Panc1 (cell line): ENCODE measurements at regions of chr20 and their contacts with region 1.

Region 1: DNA sequence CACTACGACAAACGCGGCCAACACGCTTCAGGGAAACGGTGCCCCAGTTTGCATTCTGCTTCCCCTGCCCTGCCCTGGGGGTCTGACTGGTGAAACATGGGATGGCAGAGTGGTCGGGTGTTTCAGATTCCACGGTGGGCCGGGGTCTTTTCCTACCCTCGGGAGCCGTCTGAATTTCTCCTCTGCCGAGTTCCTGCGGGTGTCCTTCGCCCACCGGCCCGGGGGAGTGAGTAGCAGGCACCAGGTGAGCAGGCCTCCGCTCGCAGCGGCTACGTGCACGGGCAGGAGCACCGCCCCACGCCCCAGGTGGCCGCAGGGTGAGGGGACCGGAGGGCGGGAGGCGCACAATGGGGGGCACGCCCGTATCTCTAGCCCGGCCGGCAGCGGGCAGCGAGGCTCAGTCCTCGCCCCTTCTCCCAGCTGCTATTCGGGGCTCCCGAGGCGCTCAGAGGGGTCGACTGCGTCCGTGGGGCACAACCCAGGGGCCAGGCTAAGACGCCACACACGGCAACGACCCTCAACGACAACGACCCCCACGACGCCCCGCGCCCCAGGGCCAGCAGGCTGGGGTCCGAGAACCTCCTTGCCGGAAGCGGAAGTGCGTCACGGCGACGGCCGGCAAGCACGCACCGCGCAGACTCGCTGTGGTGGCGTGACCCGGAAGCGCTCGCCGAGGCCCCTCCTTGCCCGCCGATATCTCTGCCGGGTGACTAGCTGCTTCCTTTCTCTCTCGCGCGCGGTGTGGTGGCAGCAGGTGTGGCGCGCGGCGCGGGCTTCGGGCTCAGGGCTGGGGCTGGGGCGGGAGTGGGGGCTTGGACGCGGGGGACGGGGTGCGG is at the start of gene RPS21:
- DNase-seq: no peak
- ATAC-seq: peak; percentile 88
- H3K4me3 ChIP-seq: peak within 1 kb of the TSS; percentile 90 to 97
- H3K27ac ChIP-seq: peak within 1 kb of the TSS; percentile 94
- H3K4me1 ChIP-seq: peaks cover 33% of the 10 kb centered on the region
- H3K27me3 ChIP-seq: no peaks in the 10 kb centered on the region
- CTCF ChIP-seq: no peak
- total RNA-seq, gene RPS21: 1,761 TPM

Region 2: DNA sequence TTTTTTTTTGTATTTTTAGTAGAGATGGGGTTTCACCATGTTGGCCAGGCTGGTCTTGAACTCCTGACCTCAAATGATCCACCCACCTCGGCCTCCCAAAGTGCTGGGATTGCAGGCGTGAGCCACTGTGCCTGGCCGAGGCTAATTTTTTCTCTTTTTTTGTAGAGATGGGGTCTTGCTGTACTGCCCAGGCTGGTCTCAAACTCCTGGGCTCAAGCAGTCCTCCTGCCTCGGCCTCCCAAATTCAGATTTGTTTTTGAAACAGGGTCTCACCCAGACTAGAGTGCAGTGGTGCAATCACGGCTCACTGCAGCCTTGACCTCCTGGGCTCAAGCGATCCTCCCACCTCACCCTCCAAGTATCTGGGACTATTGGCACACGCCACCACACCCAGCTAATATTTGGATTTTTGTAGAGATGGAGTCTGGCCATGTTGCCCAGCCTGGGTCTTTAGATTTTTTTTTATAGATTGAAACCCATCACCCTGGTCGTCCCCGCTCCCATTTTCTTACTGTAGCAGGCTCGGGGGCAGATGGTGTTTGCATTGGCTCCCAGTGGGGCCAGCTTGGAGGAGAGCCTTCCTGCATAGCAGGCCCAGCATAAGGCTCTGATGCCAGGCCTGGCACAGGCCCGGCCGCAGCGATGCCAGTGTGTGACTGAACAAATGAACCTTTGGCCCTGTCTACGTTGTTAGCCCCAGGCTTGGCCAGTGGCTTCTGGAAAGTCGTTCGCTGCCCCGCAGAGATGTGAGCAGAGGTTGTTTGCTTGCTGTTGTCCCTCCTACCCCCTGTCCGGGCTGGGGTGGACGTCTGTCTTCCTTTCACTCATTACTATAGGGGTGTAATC is 208.1 kb before region 1 on chr20:
- CTCF ChIA-PET with region 1: interaction called, 11 read pairs
- POLR2A ChIA-PET with region 1: no interaction called
- in situ Hi-C with region 1: no loop called
- intact Hi-C with region 1: no loop called
- DNase-seq: no peak
- ATAC-seq: no peak
- H3K4me3 ChIP-seq: no peak overlapping the region
- H3K27ac ChIP-seq: no peak overlapping the region
- H3K4me1 ChIP-seq: peaks cover 7% of the 10 kb centered on the region; the same call in 1 of the 2 replicates
- H3K27me3 ChIP-seq: no peaks in the 10 kb centered on the region
- CTCF ChIP-seq: no peak

Region 3: GRCh38 chr20:62302341-62303058 is 84.1 kb before region 1 on chr20 and contains the start of gene ADRM1:
- CTCF ChIA-PET with region 1: interaction called, 7 read pairs
- POLR2A ChIA-PET with region 1: interaction called, 7 read pairs
- in situ Hi-C with region 1: no loop called
- intact Hi-C with region 1: loop called (anchors 5 kb)
- DNase-seq: peak; percentile 76
- ATAC-seq: peak; percentile 80
- H3K4me3 ChIP-seq: peak within 1 kb of the TSS; percentile 83 to 94
- H3K27ac ChIP-seq: peak within 1 kb of the TSS; percentile 91
- H3K4me1 ChIP-seq: peaks cover 26% of the 10 kb centered on the region
- H3K27me3 ChIP-seq: no peaks in the 10 kb centered on the region
- CTCF ChIP-seq: peak; percentile 92
- total RNA-seq, gene ADRM1: 194 TPM

Region 4: DNA sequence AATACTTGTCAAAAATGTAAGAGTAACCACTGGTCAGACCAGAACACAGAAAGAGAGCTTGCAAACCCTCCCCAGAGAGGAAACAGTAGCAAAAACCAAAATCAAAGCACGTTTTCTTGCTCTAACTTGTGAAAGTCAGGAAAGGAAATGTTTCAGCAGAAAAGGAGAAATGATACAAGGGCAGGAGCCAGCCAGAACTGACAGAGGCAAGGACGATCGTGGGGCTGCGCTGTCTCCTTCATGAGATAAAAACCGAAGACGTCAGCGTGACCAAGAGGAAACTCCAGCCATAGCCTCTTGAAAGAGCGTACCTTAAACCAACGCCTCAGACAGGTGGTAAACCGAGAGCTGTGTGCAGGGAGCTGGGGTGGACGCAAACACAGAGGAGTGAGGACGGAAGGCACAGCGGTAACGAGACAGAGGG is 46.9 kb before region 1 on chr20:
- CTCF ChIA-PET with region 1: no interaction called
- POLR2A ChIA-PET with region 1: no interaction called
- in situ Hi-C with region 1: no loop called
- intact Hi-C with region 1: loop called (anchors 5 kb)
- DNase-seq: no peak
- ATAC-seq: no peak
- H3K4me3 ChIP-seq: no peak overlapping the region
- H3K27ac ChIP-seq: no peak overlapping the region
- H3K4me1 ChIP-seq: no peaks in the 10 kb centered on the region
- H3K27me3 ChIP-seq: no peaks in the 10 kb centered on the region
- CTCF ChIP-seq: no peak

Region 5: DNA sequence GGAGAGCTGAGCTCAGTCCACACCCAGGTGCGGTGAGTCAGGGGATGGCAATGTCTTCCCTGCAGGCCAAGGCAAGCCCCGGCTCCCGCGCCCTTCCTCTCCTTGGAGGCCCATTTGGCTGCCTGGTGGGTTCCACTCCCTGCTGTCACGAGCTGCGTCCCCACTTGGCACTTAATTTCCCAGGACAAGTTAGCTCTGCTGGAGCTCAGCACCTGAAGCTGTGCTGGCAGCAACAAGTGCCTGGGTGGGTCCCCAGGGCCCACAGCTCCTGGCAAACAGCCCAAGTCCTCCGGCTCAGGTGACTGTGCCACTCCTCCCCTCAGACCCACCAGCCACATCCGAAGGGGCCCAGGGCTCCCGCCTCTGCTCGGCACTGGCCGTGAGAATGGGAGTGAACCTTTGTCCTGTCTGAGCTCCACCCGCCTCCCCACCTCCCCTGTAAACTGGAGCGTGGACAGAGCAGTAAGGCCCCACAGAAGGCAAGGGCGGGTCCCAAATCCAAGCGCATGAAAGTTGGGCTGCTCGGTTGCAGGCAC is 36.4 kb before region 1 on chr20:
- CTCF ChIA-PET with region 1: no interaction called
- POLR2A ChIA-PET with region 1: interaction called, 14 read pairs
- in situ Hi-C with region 1: no loop called
- intact Hi-C with region 1: no loop called
- DNase-seq: no peak
- ATAC-seq: peak; percentile 54
- H3K4me3 ChIP-seq: no peak overlapping the region
- H3K27ac ChIP-seq: peak overlapping the region; percentile 81
- H3K4me1 ChIP-seq: peaks cover 53% of the 10 kb centered on the region
- H3K27me3 ChIP-seq: no peaks in the 10 kb centered on the region
- CTCF ChIP-seq: no peak

Region 6: GRCh38 chr20:62437496-62437895 is 50.9 kb after region 1 on chr20:
- CTCF ChIA-PET with region 1: no interaction called
- POLR2A ChIA-PET with region 1: interaction called, 19 read pairs
- in situ Hi-C with region 1: no loop called
- intact Hi-C with region 1: no loop called
- DNase-seq: no peak
- ATAC-seq: no peak
- H3K4me3 ChIP-seq: no peak overlapping the region
- H3K27ac ChIP-seq: no peak overlapping the region
- H3K4me1 ChIP-seq: no peaks in the 10 kb centered on the region
- H3K27me3 ChIP-seq: no peaks in the 10 kb centered on the region
- CTCF ChIP-seq: no peak

Region 7: DNA sequence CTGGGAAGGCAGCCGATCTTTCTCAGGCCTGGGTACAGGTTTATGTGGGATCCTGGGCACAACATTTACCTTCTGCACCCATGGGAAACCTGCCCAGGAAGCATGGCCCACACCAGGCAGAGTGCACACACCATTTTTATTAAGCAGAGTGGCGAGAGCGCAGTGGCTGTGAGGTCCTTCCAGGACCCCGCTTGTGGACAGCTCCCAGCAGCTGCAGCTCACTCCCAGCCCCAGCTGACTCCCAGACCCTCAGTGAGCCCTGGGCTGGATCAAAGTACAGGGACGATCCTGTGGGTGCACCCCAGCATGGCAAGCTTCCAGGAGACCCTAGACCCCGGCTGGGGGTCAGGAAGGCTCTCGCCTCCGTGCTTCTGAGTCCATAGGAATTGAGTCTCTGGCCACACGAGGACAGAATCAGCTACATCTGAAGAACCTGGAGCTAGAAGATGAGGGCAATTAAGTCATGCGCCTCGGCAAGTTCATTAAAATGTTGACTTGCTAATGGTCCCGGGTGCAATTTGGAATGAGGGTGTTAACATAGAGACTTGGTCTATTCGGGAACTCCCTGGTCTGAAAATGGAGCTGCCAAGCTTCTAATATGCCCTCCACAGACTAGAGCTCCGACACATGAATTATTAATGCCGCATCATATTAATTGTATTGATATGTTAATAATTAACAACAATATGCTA is 190.4 kb after region 1 on chr20:
- CTCF ChIA-PET with region 1: no interaction called
- POLR2A ChIA-PET with region 1: no interaction called
- in situ Hi-C with region 1: no loop called
- intact Hi-C with region 1: no loop called
- DNase-seq: no peak
- ATAC-seq: no peak
- H3K4me3 ChIP-seq: no peak overlapping the region
- H3K27ac ChIP-seq: peak overlapping the region; percentile 17; the same call in 1 of the 2 replicates
- H3K4me1 ChIP-seq: peaks cover 33% of the 10 kb centered on the region
- H3K27me3 ChIP-seq: no peaks in the 10 kb centered on the region
- CTCF ChIP-seq: no peak